Right ventricle myocardium inferior (tissue), 1 donor: ENCODE measurements at regions of chr22 and their contacts with region 1.

Region 1: DNA sequence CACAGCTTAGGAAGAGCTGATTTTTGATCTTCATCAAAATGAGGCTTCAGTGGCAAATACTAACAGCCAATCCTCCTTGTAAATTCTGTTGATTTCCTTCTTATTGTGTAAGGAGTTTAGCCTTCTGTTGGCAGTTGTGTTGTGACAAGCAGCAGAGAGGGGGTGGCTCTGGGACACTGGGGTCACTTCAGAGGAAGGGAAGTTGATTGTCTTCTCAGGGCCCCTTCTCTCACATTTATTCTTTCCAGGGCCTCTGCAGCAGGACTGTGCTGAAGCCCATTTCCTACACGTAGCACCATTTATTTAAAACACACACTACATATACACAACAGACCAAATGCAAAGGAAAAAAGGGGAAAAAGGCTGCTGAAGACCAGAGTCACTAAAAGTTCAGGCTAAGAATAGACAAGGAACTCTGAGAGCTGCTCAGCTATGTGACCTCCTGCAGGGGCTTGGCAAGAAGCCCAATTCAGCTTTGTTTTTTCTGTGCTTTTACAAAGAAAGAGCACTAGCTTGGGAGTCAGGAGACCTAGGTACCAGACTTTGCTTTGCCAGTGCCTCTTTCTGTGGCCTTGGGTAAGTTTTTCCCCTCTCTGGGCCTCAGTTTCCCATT is 28.3 kb upstream of the UPB1 start:
- DNase-seq: no peak
- ATAC-seq: peak; percentile 20

Region 2: DNA sequence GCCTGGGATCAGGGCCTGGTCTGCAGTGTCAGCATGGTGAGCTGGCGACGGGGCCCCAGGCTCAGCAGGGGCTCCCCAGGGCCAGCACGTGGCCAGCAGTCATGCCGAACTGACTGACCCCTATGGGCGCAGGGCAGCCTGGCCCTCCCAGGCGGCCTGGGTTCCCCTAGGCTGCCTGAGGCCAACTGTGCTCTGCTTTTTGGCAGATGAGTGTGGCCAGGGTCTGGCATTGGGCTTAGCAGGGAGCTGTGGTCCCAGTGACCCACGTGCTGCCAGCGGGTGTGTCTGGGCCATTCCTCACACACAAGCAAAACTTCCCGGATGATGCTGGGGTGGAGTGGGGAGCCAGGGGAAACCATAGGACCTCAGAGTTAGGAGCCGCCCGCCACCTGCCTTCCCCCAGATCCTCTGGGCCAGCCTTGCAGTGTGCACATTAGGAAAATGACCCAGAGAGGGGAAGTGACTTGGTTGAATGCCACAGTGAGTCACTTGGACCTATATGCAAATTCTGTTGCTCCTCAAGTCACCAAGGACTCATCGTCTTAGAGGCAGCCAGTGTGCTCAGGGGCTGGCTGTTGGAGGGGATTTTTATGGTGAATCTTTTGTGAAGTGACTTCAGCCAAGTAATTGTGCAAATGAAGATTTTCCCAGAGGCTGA is 32.9 kb before region 1 on chr22:
- intact Hi-C with region 1: loop called (anchors 5 kb)
- DNase-seq: no peak
- ATAC-seq: no peak

Region 3: DNA sequence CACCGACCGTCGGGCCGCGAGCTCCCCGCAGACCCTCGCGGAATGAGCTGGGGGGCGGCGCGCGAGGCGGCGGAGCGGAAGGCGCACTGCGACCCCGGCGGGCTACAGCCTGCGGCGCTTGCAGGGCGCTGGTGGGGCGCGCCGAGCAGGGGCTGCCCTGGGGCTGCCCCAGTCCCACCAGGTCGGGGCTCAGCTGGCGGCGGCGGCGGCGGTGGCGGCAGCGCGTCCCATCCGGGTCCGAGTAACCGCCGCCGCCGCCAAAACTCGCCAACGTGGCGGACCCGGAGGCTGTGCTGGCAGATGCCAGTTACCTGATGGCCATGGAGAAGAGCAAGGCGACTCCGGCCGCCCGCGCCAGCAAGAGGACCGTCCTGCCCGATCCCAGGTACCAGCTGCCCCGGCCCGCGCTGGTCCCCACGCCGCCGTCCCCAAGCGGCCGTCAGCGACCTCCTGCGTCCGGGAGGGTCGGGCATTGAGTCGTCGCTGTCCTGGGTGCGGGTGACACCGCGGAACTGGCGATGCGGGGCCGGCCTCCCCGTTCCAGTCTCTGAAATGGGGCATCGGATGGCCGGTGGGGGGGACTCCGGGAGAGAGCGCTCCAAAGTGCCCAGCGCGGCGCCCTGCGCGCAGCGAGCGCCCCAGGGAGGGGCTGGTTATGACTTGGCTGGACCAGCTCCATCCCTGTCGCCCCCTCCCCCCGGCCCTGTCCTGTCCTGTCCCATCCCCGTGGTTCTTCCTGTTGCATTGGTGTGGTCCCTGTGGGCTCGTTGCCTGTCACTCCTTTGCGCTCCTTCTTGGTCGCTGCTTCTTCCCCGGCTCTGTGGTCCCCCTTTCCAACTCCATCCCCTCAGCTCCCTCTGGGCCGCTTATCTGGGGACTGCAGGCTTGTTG is 816.1 kb after region 1 on chr22:
- intact Hi-C with region 1: no loop called
- DNase-seq: no peak
- ATAC-seq: no peak